Activated CD4-positive, alpha-beta T cell treated with anti-CD3 and anti-CD28 coated beads for 36 hours (primary cell): ENCODE measurements at regions of chr2 and their contacts with region 1.

Region 1: DNA sequence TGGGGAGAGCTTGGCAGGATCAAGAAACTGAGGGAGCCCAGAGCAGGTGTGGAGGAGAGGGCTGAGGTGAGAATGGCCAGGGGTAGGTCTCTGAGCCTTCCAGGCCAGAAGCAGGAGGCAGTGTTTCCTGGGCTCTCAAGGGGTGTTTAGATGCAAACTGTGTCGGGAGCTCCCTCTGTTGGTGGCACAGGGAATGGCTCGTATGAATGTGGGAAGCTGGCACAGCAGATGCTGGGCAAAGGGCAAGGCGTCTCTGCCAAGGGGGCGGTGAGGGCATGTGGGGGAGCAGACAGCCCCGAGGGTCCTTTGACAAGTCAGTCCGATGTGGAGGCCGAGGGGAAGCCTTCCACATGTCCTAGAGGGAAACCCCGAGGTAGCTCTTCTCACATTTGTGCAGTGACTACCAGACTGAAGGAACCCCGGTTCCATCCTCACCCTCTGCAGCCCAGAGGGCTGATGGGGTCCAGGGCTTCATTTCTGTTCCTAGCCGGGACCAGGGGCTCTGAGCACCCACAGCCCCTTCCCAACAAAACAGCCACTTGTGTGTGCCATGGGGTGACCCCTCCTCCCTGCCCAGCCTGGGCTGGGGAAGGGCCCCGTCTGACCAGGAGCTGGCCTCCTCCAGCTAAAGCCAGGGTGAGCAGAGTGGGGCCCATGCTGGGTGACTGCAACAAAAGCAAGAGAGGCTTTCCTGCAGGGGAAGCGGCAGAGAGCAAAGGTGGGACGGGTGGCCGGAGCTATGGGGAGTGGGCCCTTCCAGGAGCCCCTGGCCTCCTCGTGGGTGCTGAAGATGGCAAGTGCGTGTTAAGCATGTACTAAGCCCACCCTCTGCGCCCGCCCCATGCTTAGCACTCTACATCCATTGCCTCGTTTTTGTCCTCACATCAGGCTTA is 103.4 kb downstream of the SEPTIN10 start:
- DNase-seq: peak; percentile 86
- ATAC-seq: peak; percentile 79
- H3K4me3 Mint-ChIP-seq: no peak overlapping the region
- H3K27ac Mint-ChIP-seq: no peak overlapping the region
- H3K4me1 Mint-ChIP-seq: no peaks in the 10 kb centered on the region
- H3K27me3 Mint-ChIP-seq: no peaks in the 10 kb centered on the region

Region 2: GRCh38 chr2:108855194-108855593 is 655.2 kb before region 1 on chr2:
- CTCF ChIA-PET with region 1: no interaction called
- POLR2A ChIA-PET with region 1: no interaction called
- intact Hi-C with region 1: loop called in 1 of 2 experiments (anchors 2 kb)
- DNase-seq: no peak
- ATAC-seq: peak; percentile 63
- H3K4me3 Mint-ChIP-seq: no peak overlapping the region
- H3K27ac Mint-ChIP-seq: no peak overlapping the region
- H3K4me1 Mint-ChIP-seq: no peaks in the 10 kb centered on the region
- H3K27me3 Mint-ChIP-seq: no peaks in the 10 kb centered on the region

Region 3: GRCh38 chr2:108927936-108928659 is 582.3 kb before region 1 on chr2:
- CTCF ChIA-PET with region 1: no interaction called
- POLR2A ChIA-PET with region 1: no interaction called
- intact Hi-C with region 1: loop called in 1 of 2 experiments (anchors 2 kb)
- DNase-seq: peak; percentile 64
- ATAC-seq: peak; percentile 68
- H3K4me3 Mint-ChIP-seq: no peak overlapping the region
- H3K27ac Mint-ChIP-seq: no peak overlapping the region
- H3K4me1 Mint-ChIP-seq: peaks cover 4% of the 10 kb centered on the region
- H3K27me3 Mint-ChIP-seq: no peaks in the 10 kb centered on the region

Region 4: GRCh38 chr2:109213646-109214417 is 296.6 kb before region 1 on chr2:
- CTCF ChIA-PET with region 1: interaction called, 6 read pairs
- POLR2A ChIA-PET with region 1: no interaction called
- intact Hi-C with region 1: loop called in 1 of 2 experiments (anchors 5 kb)
- DNase-seq: peak; percentile 73
- ATAC-seq: peak; percentile 71
- H3K4me3 Mint-ChIP-seq: peak overlapping the region; percentile 38
- H3K27ac Mint-ChIP-seq: peak overlapping the region; percentile 87
- H3K4me1 Mint-ChIP-seq: peaks cover 78% of the 10 kb centered on the region
- H3K27me3 Mint-ChIP-seq: peaks cover 65% of the 10 kb centered on the region

Region 5: DNA sequence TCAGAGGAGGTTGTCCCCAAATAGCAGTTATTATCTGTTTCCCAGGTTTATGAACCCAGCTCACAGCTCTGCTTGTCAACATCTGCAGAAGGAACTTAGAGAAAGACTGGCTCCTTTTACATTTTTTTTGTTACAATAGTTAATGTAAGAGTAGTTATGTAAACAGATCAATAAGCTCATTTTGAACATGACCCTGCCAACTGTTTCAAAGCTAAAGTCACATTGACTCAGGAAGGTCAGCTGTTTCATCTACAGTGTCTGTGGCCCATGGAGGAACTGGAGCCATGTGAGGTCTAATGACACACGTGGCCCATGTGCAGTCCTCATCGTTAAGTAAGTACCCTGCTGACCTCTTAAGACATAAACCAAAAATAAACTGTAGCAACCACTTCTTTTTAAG is 284.3 kb before region 1 on chr2:
- CTCF ChIA-PET with region 1: no interaction called
- POLR2A ChIA-PET with region 1: no interaction called
- intact Hi-C with region 1: no loop called
- DNase-seq: no peak
- ATAC-seq: no peak
- H3K4me3 Mint-ChIP-seq: no peak overlapping the region
- H3K27ac Mint-ChIP-seq: no peak overlapping the region
- H3K4me1 Mint-ChIP-seq: peaks cover 10% of the 10 kb centered on the region
- H3K27me3 Mint-ChIP-seq: peaks cover 4% of the 10 kb centered on the region

Region 6: GRCh38 chr2:109331896-109332848 is 178.2 kb before region 1 on chr2:
- CTCF ChIA-PET with region 1: interaction called, 4 read pairs
- POLR2A ChIA-PET with region 1: no interaction called
- intact Hi-C with region 1: loop called in 1 of 2 experiments (anchors 5 kb)
- DNase-seq: peak; percentile 41
- ATAC-seq: peak; percentile 34
- H3K4me3 Mint-ChIP-seq: peak overlapping the region; percentile 50
- H3K27ac Mint-ChIP-seq: peak overlapping the region; percentile 59
- H3K4me1 Mint-ChIP-seq: peaks cover 30% of the 10 kb centered on the region
- H3K27me3 Mint-ChIP-seq: peaks cover 6% of the 10 kb centered on the region

Region 7: DNA sequence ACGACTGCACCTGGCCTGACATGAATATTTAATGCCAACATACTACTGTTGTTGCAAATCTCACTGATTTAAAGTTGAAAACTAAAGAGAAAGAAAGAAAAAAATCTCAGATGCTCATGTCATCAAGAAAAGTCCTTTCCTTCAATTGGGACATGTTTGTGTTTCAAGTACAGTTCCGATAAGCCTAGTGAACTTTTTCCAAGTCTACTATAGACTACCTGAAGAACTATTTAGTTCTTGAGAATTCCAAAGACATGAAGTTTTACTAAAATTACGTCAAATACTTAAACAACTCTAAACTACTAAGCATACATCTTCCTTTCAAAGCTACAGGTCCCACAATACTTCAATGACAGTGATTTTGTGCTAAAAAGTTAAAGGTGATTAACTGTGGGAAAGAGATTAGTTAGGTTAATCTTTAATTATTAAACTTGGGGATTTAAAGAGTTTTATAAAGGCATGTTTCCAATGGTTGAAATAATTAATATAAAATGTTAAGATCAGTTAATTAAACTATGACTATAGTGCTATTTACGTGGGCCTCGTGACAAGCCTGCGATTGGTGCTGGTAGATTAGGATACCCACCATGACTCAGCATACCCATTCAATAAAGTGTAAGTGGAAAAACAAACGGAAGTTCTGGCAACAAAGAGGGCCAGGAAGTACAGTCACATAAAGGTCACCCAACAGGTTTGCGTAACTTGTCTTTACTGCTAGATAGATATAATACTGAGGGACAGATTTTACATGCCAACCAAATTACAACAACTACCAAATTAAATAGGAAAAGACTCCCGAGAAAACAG is 47.9 kb after region 1 on chr2:
- CTCF ChIA-PET with region 1: no interaction called
- POLR2A ChIA-PET with region 1: no interaction called
- intact Hi-C with region 1: no loop called
- DNase-seq: peak; percentile 21
- ATAC-seq: peak; percentile 71
- H3K4me3 Mint-ChIP-seq: no peak overlapping the region
- H3K27ac Mint-ChIP-seq: no peak overlapping the region
- H3K4me1 Mint-ChIP-seq: peaks cover 12% of the 10 kb centered on the region
- H3K27me3 Mint-ChIP-seq: no peaks in the 10 kb centered on the region

Region 8: GRCh38 chr2:110182449-110182848 is 672.1 kb after region 1 on chr2:
- CTCF ChIA-PET with region 1: no interaction called
- POLR2A ChIA-PET with region 1: no interaction called
- intact Hi-C with region 1: no loop called
- DNase-seq: no peak
- ATAC-seq: no peak
- H3K4me3 Mint-ChIP-seq: no peak overlapping the region
- H3K27ac Mint-ChIP-seq: no peak overlapping the region
- H3K4me1 Mint-ChIP-seq: no peaks in the 10 kb centered on the region
- H3K27me3 Mint-ChIP-seq: peaks cover 10% of the 10 kb centered on the region